IMR-90 (cell line): ENCODE measurements at regions of chr22 and their contacts with region 1.

Region 1: GRCh38 chr22:19891317-19892256 is 36.9 kb upstream of the GNB1L start:
- DNase-seq: peak; percentile 89
- ATAC-seq: peak; percentile 72
- H3K4me3 ChIP-seq: no peak overlapping the region
- H3K27ac ChIP-seq: peak overlapping the region; percentile 74
- H3K4me1 ChIP-seq: peaks cover 34% of the 10 kb centered on the region
- H3K27me3 ChIP-seq: no peaks in the 10 kb centered on the region
- CTCF ChIP-seq: no peak
- POLR2A ChIP-seq: no peak
- RAD21 ChIP-seq: no peak

Region 2: DNA sequence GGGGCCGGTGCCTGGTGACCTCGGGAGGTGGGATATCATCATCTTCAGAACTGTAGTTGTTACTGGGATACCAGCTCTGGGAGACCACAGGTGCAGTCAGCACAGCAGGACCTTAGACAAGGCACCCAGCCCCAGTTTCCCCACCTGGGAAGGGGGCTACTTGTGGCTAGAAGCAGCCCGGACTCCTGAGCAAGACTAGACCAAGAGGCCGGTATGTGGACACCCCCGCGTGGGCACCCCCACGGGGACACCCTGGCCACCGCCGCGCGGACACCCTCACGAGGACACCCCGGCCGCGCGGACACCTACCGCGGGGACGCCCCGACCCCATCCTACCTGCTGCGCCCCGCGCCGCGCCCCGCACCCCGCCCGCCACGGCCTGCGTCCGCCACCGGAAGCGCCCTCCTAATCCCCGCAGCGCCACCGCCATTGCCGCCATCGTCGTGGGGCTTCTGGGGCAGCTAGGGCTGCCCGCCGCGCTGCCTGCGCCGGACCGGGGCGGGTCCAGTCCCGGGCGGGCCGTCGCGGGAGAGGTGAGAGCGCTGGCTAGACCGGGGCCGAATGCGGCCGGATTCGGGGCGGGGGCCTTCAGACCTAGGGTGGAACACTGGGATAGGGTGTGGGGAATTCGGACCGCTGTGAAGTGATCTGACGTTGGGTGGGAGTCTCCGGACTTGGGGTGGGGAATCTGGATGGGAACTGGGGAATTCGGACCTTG is 49.9 kb after region 1 on chr22 and contains the starts of genes COMT and TXNRD2:
- CTCF ChIA-PET with region 1: no interaction called
- POLR2A ChIA-PET with region 1: no interaction called
- dilution Hi-C with region 1: no loop called
- in situ Hi-C with region 1: no loop called
- intact Hi-C with region 1: loop called (anchors 5 kb)
- DNase-seq: peak; percentile 57
- ATAC-seq: peak; percentile 75
- H3K4me3 ChIP-seq: peak within 1 kb of the TSS; percentile 91
- H3K27ac ChIP-seq: peak within 1 kb of the TSS; percentile 99
- H3K4me1 ChIP-seq: peaks cover 24% of the 10 kb centered on the region
- H3K27me3 ChIP-seq: no peaks in the 10 kb centered on the region
- CTCF ChIP-seq: no peak
- POLR2A ChIP-seq: peak; percentile 69; the same call in 1 of the 2 replicates
- RAD21 ChIP-seq: no peak
- total RNA-seq, gene COMT: 175 and 202 TPM in 2 replicates
- total RNA-seq, gene TXNRD2: 14.7 and 15.6 TPM in 2 replicates